H1 (cell line): ENCODE measurements at regions of chr3 and their contacts with region 1.

Region 1: GRCh38 chr3:13648060-13649001 is 99.4 kb downstream of the FBLN2 start:
- DNase-seq: peak; percentile 84 to 99
- H3K4me3 ChIP-seq: 0 out of 8 replicates have a peak overlapping the region, but pooled peaks of 1 of the 4 experiments have one; percentile 14
- H3K27ac ChIP-seq: peak overlapping the region; percentile 95
- H3K4me1 ChIP-seq: peaks cover 0 to 9% (median 4%) of the 10 kb centered on the region in 4 experiments; a peak in 4 of 7 replicates
- H3K27me3 ChIP-seq: peaks cover 0 to 6% (median 2%) of the 10 kb centered on the region in 4 experiments; a peak in 3 of 7 replicates
- CTCF ChIP-seq: peak in 2 of 3 experiments; percentile 97 to 100; a peak in 3 of 4 replicates
- EP300 ChIP-seq: peak in 1 of 2 experiments; percentile 99; a peak in 2 of 3 replicates
- POLR2A ChIP-seq: no peak
- RAD21 ChIP-seq: peak; percentile 99 to 100

Region 2: DNA sequence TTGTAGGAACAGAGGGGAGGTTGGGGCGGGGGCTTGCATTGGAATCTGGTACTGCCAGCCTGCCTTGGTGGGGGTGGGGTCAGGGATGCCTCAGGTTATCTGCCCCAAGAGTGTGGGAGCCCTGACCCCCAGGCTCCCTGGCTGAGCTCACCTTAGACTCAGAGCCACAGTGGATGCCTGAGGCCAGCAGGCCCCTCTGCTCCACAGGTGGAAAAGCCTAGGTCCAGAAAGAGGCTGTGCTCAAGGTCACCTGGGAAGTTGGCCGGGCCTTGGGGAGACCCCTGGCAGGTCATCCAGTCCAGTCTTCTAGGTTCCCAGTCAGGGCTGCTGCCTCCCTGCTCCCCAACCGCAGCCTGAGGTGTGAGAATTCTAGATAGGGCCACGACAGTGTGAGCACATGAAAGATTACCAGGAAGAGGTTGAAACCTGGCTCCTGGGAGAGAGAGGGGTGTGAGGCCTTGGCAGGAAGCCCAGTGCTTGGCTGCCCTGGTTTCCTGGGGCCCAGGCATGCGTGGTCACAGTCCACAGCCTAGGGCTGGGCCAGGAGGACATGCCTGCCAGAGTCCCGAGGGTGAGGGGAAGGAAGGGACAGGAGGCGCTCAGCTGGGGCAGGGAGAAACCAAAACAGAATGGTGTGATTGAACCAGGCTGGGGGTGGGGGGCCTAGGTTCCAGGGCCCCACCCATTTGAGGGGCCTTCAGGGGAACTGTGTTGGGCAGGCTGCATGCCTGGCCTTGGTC is 163.3 kb before region 1 on chr3:
- CTCF ChIA-PET with region 1: interaction called, 80 read pairs
- POLR2A ChIA-PET with region 1: interaction called, 3 read pairs
- DNase-seq: no peak
- H3K4me3 ChIP-seq: no peak overlapping the region
- H3K27ac ChIP-seq: no peak overlapping the region
- H3K4me1 ChIP-seq: peaks cover 0 to 11% (median 6%) of the 10 kb centered on the region in 4 experiments; a peak in 3 of 7 replicates
- H3K27me3 ChIP-seq: peaks cover 0 to 9% (median 4%) of the 10 kb centered on the region in 4 experiments; a peak in 5 of 7 replicates
- CTCF ChIP-seq: no peak
- EP300 ChIP-seq: no peak
- POLR2A ChIP-seq: no peak
- RAD21 ChIP-seq: no peak

Region 3: GRCh38 chr3:13519006-13519791 is 129.1 kb before region 1 on chr3:
- CTCF ChIA-PET with region 1: interaction called, 31 read pairs
- POLR2A ChIA-PET with region 1: interaction called, 3 read pairs
- DNase-seq: no peak
- H3K4me3 ChIP-seq: no peak overlapping the region
- H3K27ac ChIP-seq: no peak overlapping the region
- H3K4me1 ChIP-seq: peaks cover 0 to 2% (median 0%) of the 10 kb centered on the region in 4 experiments; a peak in 1 of 7 replicates
- H3K27me3 ChIP-seq: no peaks in the 10 kb centered on the region; a peak in 1 of 7 replicates
- CTCF ChIP-seq: peak in 1 of 3 experiments; percentile 20; a peak in 2 of 4 replicates
- EP300 ChIP-seq: no peak
- POLR2A ChIP-seq: no peak
- RAD21 ChIP-seq: no peak

Region 4: DNA sequence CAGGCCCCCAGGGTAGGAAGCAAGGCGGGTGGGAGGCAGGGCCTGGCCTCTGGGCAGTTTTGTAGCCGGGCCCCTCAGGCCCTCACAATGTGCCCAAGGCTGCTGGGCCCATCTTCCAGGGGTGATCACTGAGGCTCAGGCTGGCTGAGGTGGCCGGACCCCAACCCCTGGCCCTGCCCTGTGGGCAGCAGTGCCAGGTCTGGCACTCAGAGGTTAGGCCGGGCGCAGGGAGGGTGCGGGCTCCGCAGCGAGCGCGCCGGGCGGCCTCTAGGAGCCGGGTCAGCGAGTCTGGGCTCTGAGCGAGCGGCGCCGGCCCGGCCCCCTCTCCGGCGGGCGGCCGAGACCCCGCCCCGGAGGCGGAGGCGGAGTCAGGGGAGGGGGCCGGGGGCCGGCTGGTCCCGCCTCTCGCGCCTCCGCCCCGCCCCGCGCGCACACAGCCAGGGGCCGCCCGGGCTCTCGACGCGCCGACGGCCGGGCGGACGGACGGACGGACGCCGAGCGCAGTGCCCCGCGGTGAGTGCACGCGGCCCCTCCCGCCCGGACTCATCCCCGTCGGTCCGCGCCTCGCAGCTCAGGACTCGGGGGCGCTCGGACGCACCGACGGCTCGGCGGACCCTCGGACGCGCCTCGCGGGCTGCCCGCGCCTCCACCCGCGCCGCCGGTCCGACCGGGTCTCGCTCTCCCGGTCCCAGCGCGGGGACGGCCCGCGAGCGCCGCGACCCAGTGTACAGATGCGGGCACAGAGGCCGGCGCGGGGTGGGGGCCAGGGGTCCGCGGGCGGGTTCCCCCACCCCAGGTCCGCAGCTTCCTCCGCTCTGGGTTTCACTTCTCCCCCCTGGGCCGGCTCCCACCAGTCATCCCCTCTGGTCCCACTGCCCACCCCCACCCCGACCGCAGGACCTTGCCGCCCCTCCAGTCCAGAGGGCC is 99.4 kb before region 1 on chr3 and contains the start of gene FBLN2:
- CTCF ChIA-PET with region 1: interaction called, 38 read pairs
- POLR2A ChIA-PET with region 1: no interaction called
- DNase-seq: peak in 1 of 2 experiments; percentile 86
- H3K4me3 ChIP-seq: peak within 1 kb of the TSS; percentile 32 to 55 (median 42)
- H3K27ac ChIP-seq: no peak within 1 kb of the TSS
- H3K4me1 ChIP-seq: peaks cover 0 to 28% (median 11%) of the 10 kb centered on the region in 4 experiments; a peak in 6 of 7 replicates
- H3K27me3 ChIP-seq: peaks cover 0 to 22% (median 18%) of the 10 kb centered on the region in 4 experiments; a peak in 6 of 7 replicates
- CTCF ChIP-seq: no peak
- EP300 ChIP-seq: no peak
- POLR2A ChIP-seq: peak in 1 of 2 experiments; percentile 24; a peak in 1 of 3 replicates
- RAD21 ChIP-seq: no peak
- total RNA-seq, gene FBLN2: 15.5 and 17.4 TPM in 2 replicates

Region 5: GRCh38 chr3:13623099-13623654 is 25.2 kb before region 1 on chr3:
- CTCF ChIA-PET with region 1: interaction called, 17 read pairs
- POLR2A ChIA-PET with region 1: no interaction called
- DNase-seq: no peak
- H3K4me3 ChIP-seq: no peak overlapping the region
- H3K27ac ChIP-seq: no peak overlapping the region
- H3K4me1 ChIP-seq: peaks cover 0 to 7% (median 3%) of the 10 kb centered on the region in 4 experiments; a peak in 3 of 7 replicates
- H3K27me3 ChIP-seq: no peaks in the 10 kb centered on the region
- CTCF ChIP-seq: no peak
- EP300 ChIP-seq: no peak
- POLR2A ChIP-seq: no peak
- RAD21 ChIP-seq: no peak